A549 (cell line): ENCODE measurements at regions of chr15 and their contacts with region 1.

Region 1: GRCh38 chr15:66946578-66947164 is 118.7 kb upstream of the SMAD3 start:
- DNase-seq: peak; percentile 83 to 92
- ATAC-seq: peak; percentile 72 to 77
- H3K4me3 ChIP-seq: no peak overlapping the region
- H3K27ac ChIP-seq: peak overlapping the region; percentile 60 to 82
- H3K4me1 ChIP-seq: peaks cover 39% of the 10 kb centered on the region
- CTCF ChIP-seq: peak; percentile 98
- EP300 ChIP-seq: no peak
- POLR2A ChIP-seq: no peak
- RAD21 ChIP-seq: peak; percentile 99

Region 2: DNA sequence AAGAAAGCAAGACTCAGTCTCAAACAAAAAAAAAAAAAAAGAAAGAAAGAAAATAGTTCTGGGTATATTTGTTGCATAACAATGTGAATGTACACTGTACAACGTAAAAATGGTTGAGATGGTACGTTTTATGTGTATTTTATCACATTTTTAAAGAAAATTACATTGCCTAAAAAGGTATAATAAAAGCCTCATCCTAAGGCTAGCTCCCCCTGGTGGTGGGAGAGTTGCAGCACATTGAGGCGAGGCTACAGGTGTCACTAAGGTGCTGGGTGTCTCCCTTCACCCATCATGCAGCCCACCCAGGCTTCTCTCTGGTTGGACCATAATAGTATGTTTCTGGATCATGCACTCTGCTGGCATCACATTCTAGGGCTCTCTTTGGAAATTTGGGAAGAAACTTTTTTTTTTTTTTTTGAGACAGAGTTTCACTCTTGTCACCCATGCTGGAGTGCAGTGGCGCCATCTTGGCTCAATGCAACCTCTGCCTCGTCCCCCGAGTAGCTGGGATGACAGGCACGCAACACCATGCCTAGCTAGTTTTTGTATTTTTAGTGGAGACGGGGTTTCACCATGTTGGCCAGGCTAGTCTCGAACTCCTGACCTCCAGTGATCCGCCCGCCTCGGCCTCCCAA is 1089.7 kb before region 1 on chr15:
- CTCF ChIA-PET with region 1: no interaction called
- POLR2A ChIA-PET with region 1: no interaction called
- DNase-seq: peak; percentile 57 to 77
- ATAC-seq: peak; percentile 89 to 90
- H3K4me3 ChIP-seq: no peak overlapping the region
- H3K27ac ChIP-seq: no peak overlapping the region
- H3K4me1 ChIP-seq: no peaks in the 10 kb centered on the region
- CTCF ChIP-seq: peak; percentile 92
- EP300 ChIP-seq: no peak
- POLR2A ChIP-seq: no peak
- RAD21 ChIP-seq: peak; percentile 55 to 56; a peak in 4 of 5 replicates

Region 3: DNA sequence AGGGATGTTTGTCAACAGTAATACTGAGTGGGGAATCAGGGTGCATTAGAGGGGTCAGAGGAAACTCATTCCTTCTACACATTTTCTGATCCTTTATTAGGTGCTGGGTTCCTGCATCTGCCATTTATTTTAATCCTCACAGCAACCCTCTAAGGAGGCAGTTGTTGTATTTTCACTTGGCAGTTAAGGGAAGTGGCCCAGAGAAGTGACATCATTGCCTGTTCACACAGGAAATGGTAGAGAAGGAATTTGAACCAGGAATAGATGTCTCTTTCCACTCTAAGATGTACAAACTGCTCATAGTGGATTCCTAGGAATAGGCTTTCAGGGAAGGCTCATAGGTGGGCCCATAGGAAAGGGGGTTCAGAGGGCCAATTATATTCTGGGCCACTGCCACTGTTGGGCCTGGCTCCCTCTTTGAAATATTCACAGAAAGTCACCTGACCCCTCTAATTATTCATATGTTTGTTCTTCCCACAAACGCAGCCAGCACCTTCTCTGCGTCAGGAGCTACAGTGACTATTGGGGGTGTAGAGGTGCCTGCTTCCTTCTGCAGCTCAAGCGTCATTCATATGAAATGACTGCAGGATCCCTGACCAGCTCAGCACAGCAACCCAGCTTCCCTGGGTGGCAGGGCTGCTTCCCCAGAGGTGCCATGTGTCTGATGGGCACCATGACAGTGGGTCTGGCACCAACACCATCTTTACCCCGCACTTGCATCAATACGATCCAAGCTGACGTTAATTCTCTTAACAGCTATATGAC is 45.2 kb before region 1 on chr15:
- CTCF ChIA-PET with region 1: interaction called, 18 read pairs
- POLR2A ChIA-PET with region 1: no interaction called
- DNase-seq: peak in 1 of 2 experiments; percentile 45
- ATAC-seq: no peak
- H3K4me3 ChIP-seq: no peak overlapping the region
- H3K27ac ChIP-seq: peak overlapping the region; percentile 1 to 61; a peak in 3 of 6 replicates
- H3K4me1 ChIP-seq: peaks cover 29% of the 10 kb centered on the region
- CTCF ChIP-seq: no peak
- EP300 ChIP-seq: no peak
- POLR2A ChIP-seq: no peak
- RAD21 ChIP-seq: no peak

Region 4: GRCh38 chr15:66994927-66995656 is 48.4 kb after region 1 on chr15:
- CTCF ChIA-PET with region 1: interaction called, 10 read pairs
- POLR2A ChIA-PET with region 1: no interaction called
- DNase-seq: peak in 1 of 2 experiments; percentile 25
- ATAC-seq: peak; percentile 47 to 68; a peak in 4 of 6 replicates
- H3K4me3 ChIP-seq: no peak overlapping the region
- H3K27ac ChIP-seq: no peak overlapping the region
- H3K4me1 ChIP-seq: peaks cover 7% of the 10 kb centered on the region; the same call in 1 of the 3 replicates
- CTCF ChIP-seq: no peak
- EP300 ChIP-seq: no peak
- POLR2A ChIP-seq: no peak
- RAD21 ChIP-seq: no peak

Region 5: DNA sequence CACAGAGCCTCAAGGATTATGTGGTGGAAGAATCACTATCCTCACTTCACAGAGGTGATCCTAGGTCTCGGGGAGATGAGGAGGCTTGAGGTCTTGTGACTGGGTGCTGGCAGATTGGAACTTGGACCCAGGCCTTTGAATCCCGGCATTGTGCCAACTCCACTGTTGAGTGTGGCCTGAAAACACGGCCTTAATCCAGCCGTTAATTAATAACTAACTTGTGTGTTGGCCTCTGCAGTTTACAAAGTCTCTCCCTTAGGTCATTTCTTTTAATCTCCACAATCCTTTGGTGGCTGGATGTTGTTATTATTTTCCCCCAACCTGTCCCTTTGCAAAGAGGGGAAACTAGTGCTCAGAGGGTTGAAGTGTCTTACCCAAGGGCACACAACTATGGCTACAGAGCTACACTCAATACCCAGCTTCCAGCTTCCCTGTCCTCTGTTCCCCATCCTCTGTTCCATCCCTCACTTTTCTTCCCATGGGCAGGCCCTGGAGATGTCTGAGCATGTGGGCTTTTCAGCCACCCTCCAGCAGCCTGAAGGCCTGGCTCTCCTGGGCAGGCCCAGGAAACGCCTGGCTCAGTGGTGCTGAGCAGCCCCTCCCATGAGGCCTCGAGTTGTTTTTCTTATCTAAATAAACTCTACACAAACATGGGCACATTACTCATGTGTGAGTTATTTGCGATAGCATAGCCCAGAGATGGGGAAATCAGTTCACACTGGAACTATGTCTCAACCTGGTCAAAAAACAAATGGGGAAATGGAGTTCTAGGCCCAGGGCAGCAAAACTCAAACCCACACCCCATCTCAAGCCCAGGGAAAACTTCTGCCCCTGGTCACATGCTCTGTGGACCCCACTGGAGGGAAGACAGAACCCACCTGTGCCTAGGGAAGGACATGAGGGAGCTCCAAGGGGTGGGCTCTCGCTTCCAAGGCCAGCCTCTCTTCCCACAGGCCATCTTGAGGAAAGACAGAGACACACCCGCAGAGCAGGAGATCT is 101.9 kb after region 1 on chr15:
- CTCF ChIA-PET with region 1: interaction called, 29 read pairs
- POLR2A ChIA-PET with region 1: no interaction called
- DNase-seq: peak; percentile 87 to 98
- ATAC-seq: peak; percentile 78 to 87
- H3K4me3 ChIP-seq: peak overlapping the region; percentile 14; the same call in 1 of the 3 replicates
- H3K27ac ChIP-seq: peak overlapping the region; percentile 96 to 98
- H3K4me1 ChIP-seq: peaks cover 67% of the 10 kb centered on the region
- CTCF ChIP-seq: no peak
- EP300 ChIP-seq: peak; percentile 79 to 87; a peak in 3 of 5 replicates
- POLR2A ChIP-seq: peak; percentile 31; the same call in 1 of the 2 replicates
- RAD21 ChIP-seq: peak; percentile 40 to 52

Region 6: GRCh38 chr15:67120839-67121643 is 174.4 kb after region 1 on chr15:
- CTCF ChIA-PET with region 1: interaction called, 24 read pairs
- POLR2A ChIA-PET with region 1: interaction called, 9 read pairs
- DNase-seq: peak; percentile 87 to 90
- ATAC-seq: peak; percentile 6 to 24; a peak in 4 of 6 replicates
- H3K4me3 ChIP-seq: peak overlapping the region; percentile 2; the same call in 1 of the 3 replicates
- H3K27ac ChIP-seq: peak overlapping the region; percentile 86 to 92
- H3K4me1 ChIP-seq: peaks cover 97% of the 10 kb centered on the region
- CTCF ChIP-seq: no peak
- EP300 ChIP-seq: peak; percentile 80 to 94; a peak in 3 of 5 replicates
- POLR2A ChIP-seq: no peak
- RAD21 ChIP-seq: peak; percentile 2 to 27; a peak in 2 of 5 replicates

Region 7: DNA sequence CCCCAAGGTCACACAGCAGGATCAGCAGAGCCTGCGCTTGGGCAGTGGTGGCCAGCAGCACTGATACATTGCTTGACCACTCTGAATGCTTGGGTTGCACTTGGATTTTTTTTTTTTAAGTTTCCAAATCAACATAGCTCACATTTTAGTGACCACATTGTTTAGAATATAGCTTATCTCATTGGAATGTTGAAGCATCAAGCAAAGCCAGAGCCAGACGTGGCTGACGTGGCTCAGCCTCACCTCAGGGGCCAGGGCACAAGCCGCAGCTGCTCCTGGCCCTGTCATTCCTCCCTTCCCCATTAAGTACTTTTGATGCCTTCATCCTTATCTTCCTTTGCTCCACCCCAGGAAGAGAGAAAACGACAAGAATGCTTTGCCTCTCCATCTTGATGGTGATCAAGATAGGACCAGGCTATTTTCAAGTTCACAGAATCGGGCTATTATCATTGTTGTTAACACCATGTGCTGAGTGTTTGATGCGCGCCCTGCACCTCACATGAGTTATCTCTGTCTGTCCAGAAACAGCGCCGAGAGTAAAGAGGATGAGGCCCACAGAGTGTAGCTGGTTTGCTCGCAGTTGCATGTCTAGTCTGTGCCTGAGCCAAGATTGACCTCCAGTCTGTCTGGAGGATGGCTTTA is 232.0 kb after region 1 on chr15:
- CTCF ChIA-PET with region 1: interaction called, 15 read pairs
- POLR2A ChIA-PET with region 1: interaction called, 3 read pairs
- DNase-seq: peak in 1 of 2 experiments; percentile 69
- ATAC-seq: peak; percentile 20 to 43; a peak in 4 of 6 replicates
- H3K4me3 ChIP-seq: no peak overlapping the region
- H3K27ac ChIP-seq: peak overlapping the region; percentile 13 to 84; a peak in 4 of 6 replicates
- H3K4me1 ChIP-seq: peaks cover 79% of the 10 kb centered on the region
- CTCF ChIP-seq: no peak
- EP300 ChIP-seq: no peak
- POLR2A ChIP-seq: no peak
- RAD21 ChIP-seq: no peak

Region 8: DNA sequence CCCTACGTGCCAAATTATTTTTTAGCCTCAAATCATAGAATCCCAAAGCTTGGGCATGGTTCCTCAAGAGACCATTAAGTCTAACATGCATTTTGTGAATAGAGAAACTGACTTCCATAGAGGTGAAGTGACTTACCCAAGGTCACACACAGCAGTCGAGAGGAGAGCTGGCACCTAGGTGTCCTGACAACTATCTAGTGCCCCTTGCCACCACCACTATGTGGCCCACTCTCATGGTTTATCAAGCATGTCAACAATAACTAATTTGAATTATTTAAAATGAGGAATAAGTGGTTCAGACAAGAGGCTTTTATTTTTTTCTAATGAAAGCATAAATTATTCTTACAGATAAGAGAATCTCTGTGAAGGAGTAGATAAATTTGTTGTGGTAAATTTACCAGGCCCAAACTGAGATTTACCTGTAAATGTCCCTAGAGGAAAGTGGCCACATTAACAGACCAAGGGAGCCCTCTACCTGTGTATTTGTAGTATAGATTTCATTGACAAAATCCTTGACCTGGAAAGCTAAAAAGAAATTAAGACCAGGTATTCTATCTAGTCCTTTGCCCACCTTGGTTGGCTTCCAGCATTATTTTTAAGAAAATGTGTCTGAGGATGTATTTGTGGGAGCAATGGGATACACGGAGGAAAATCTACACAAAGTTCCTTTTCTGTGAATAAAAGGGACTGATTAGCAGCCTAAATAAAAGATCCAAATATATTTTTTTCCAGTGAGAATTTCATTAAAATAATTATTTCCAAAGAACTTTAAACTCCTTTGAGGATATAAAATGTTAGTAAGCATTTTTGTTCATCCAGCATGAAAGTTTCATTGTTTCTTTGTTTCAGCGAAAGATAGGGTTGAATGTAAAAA is 357.1 kb after region 1 on chr15:
- CTCF ChIA-PET with region 1: interaction called, 115 read pairs
- POLR2A ChIA-PET with region 1: interaction called, 3 read pairs
- DNase-seq: peak; percentile 30 to 76
- ATAC-seq: peak; percentile 71 to 90
- H3K4me3 ChIP-seq: no peak overlapping the region
- H3K27ac ChIP-seq: peak overlapping the region in 1 of 2 experiments; percentile 49; a peak in 2 of 6 replicates
- H3K4me1 ChIP-seq: peaks cover 20% of the 10 kb centered on the region; the same call in 2 of the 3 replicates
- CTCF ChIP-seq: peak; percentile 96
- EP300 ChIP-seq: no peak
- POLR2A ChIP-seq: no peak
- RAD21 ChIP-seq: peak; percentile 96 to 98